CD8-positive, alpha-beta memory T cell (primary cell): ENCODE measurements at regions of chr3 and their contacts with region 1.

Region 1: DNA sequence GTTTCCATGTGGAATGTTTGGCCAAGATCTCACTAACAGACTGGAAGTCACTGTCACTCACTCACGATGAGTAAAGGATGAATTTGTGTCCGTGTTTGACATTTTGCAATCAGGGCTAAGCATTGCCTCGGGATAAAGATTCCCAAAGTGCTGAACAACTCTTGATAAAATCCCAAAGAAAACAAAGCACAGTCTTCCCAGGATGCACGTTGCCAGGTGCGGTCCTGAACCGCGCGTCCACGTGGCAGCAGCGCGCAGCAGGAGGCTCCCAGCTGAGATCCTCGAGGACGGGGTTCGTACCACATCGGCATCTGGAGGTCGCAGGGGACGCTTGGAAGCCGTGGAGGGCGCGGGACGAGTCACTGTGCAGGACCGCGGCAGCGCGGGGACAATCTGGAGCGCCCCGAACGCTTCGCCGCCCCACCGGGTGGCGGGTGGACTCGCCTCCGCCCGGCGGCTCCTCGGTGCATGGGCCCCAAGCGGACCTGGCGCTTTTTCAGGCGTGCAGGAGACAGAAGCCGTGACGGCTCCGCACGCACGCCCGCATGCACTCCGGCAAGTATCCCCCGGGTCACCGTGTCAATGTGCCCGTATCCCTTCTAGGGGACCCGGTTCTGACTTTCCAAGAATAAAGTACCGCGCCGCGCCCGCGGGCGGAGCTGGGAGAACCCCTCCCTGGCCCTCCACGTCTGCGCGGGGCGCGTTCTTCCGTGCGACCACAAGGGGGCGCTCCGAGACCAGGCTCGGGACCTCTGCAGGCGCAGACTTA is 17.7 kb downstream of the CPN2 start:
- DNase-seq: peak; percentile 79 to 87 (median 80)
- H3K4me3 ChIP-seq: no peak overlapping the region
- H3K4me3 Mint-ChIP-seq: peak overlapping the region; percentile 36 to 75 (median 54)
- H3K27ac ChIP-seq: no peak overlapping the region
- H3K27ac Mint-ChIP-seq: no peak overlapping the region
- H3K4me1 ChIP-seq: no peaks in the 10 kb centered on the region
- H3K4me1 Mint-ChIP-seq: peaks cover 2 to 10% (median 5%) of the 10 kb centered on the region in 3 donors
- H3K27me3 ChIP-seq: peaks cover 14% of the 10 kb centered on the region
- H3K27me3 Mint-ChIP-seq: peaks cover 31 to 44% of the 10 kb centered on the region in 2 donors

Region 2: DNA sequence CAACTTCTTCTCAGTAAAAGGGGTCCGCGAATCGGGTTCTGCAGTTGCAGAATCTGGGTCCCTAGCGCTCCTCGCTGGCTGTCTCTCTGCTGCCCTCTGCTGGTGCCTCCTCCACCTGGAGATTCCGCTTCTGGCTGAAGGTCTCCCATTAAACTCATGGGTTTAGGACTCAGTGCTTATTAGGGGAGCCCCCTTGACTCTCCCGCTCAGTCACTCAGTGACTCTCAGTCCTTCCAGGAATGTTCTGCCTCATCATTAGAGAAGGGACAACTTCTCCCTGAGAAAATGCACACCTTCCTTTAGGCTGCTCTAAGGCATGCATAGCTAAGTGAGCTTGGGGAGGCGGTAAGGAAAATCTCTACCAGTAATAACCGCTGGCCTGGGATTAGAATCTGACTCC is 10.6 kb after region 1 on chr3:
- CTCF ChIA-PET with region 1: interaction called, 83 read pairs
- POLR2A ChIA-PET with region 1: no interaction called
- DNase-seq: peak; percentile 39 to 77 (median 58)
- H3K4me3 ChIP-seq: no peak overlapping the region
- H3K4me3 Mint-ChIP-seq: no peak overlapping the region
- H3K27ac ChIP-seq: no peak overlapping the region
- H3K27ac Mint-ChIP-seq: no peak overlapping the region
- H3K4me1 ChIP-seq: no peaks in the 10 kb centered on the region
- H3K4me1 Mint-ChIP-seq: no peaks in the 10 kb centered on the region
- H3K27me3 ChIP-seq: no peaks in the 10 kb centered on the region
- H3K27me3 Mint-ChIP-seq: peaks cover 3 to 31% of the 10 kb centered on the region in 2 donors

Region 3: GRCh38 chr3:194396889-194397756 is 63.7 kb after region 1 on chr3:
- CTCF ChIA-PET with region 1: interaction called, 14 read pairs
- POLR2A ChIA-PET with region 1: no interaction called
- DNase-seq: peak in 2 of 5 donors; percentile 16 to 69
- H3K4me3 ChIP-seq: peak overlapping the region; percentile 86
- H3K4me3 Mint-ChIP-seq: peak overlapping the region; percentile 79 to 91 (median 83)
- H3K27ac ChIP-seq: no peak overlapping the region
- H3K27ac Mint-ChIP-seq: peak overlapping the region in 5 of 8 donors; percentile 32 to 71 (median 53)
- H3K4me1 ChIP-seq: peaks cover 27% of the 10 kb centered on the region
- H3K4me1 Mint-ChIP-seq: peaks cover 22 to 54% (median 28%) of the 10 kb centered on the region in 3 donors
- H3K27me3 ChIP-seq: no peaks in the 10 kb centered on the region
- H3K27me3 Mint-ChIP-seq: peaks cover 6 to 23% of the 10 kb centered on the region in 2 donors

Region 4: GRCh38 chr3:194404365-194405140 is 71.2 kb after region 1 on chr3:
- CTCF ChIA-PET with region 1: interaction called, 39 read pairs
- POLR2A ChIA-PET with region 1: no interaction called
- DNase-seq: peak in 2 of 5 donors; percentile 21 to 62
- H3K4me3 ChIP-seq: no peak overlapping the region
- H3K4me3 Mint-ChIP-seq: no peak overlapping the region
- H3K27ac ChIP-seq: no peak overlapping the region
- H3K27ac Mint-ChIP-seq: peak overlapping the region in 1 of 8 donors; percentile 58
- H3K4me1 ChIP-seq: peaks cover 5% of the 10 kb centered on the region
- H3K4me1 Mint-ChIP-seq: peaks cover 2 to 13% (median 9%) of the 10 kb centered on the region in 3 donors
- H3K27me3 ChIP-seq: no peaks in the 10 kb centered on the region
- H3K27me3 Mint-ChIP-seq: peaks cover 0 to 6% of the 10 kb centered on the region in 2 donors